Panc1 (cell line): ENCODE measurements at regions of chr18 and their contacts with region 1.

Region 1: GRCh38 chr18:32771871-32772580 is 797 bp downstream of the KLHL14 start:
- DNase-seq: no peak
- ATAC-seq: peak; percentile 39
- H3K4me3 ChIP-seq: peak overlapping the region; percentile 43 to 77
- H3K27ac ChIP-seq: no peak overlapping the region; the same call in 1 of the 2 replicates
- H3K4me1 ChIP-seq: peaks cover 11% of the 10 kb centered on the region
- H3K27me3 ChIP-seq: no peaks in the 10 kb centered on the region
- CTCF ChIP-seq: no peak

Region 2: GRCh38 chr18:32048507-32049091 is 723.4 kb before region 1 on chr18:
- CTCF ChIA-PET with region 1: interaction called, 10 read pairs
- POLR2A ChIA-PET with region 1: no interaction called
- in situ Hi-C with region 1: no loop called
- intact Hi-C with region 1: no loop called
- DNase-seq: no peak
- ATAC-seq: no peak
- H3K4me3 ChIP-seq: no peak overlapping the region
- H3K27ac ChIP-seq: no peak overlapping the region
- H3K4me1 ChIP-seq: no peaks in the 10 kb centered on the region
- H3K27me3 ChIP-seq: no peaks in the 10 kb centered on the region
- CTCF ChIP-seq: no peak

Region 3: GRCh38 chr18:32695534-32695933 is 76.5 kb before region 1 on chr18:
- CTCF ChIA-PET with region 1: no interaction called
- POLR2A ChIA-PET with region 1: no interaction called
- in situ Hi-C with region 1: no loop called
- intact Hi-C with region 1: no loop called
- DNase-seq: no peak
- ATAC-seq: no peak
- H3K4me3 ChIP-seq: no peak overlapping the region
- H3K27ac ChIP-seq: no peak overlapping the region
- H3K4me1 ChIP-seq: no peaks in the 10 kb centered on the region; the same call in 1 of the 2 replicates
- H3K27me3 ChIP-seq: no peaks in the 10 kb centered on the region
- CTCF ChIP-seq: no peak